IMR-90 (cell line): ENCODE measurements at regions of chr5 and their contacts with region 1.

Region 1: DNA sequence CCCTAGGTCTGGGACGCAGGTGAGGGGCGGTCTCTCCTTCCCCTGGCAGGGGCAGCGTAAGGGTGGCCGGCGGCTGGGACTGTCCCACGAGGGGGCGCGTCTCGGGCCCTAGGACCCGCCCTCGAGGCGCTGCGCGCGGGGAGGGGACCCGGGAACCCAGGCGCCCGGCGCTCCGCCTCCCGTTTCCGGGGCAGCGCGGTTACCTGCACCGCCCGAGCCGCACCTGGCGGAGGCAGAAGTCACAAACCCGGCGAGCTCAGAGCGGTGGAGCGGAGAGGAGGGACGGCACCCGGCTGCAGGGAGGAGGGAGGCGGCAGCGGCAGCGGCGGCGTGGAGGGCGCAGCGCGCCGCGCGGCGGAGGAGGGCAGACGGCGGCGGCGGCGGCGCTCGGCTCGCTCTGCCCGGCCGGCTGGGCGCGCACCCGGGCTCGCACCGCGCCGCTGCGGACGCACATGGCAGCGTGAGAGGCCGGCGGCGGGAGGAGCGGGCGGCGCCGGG is at the start of gene WWC1:
- DNase-seq: peak; percentile 26
- ATAC-seq: peak; percentile 71
- H3K4me3 ChIP-seq: peak within 1 kb of the TSS; percentile 98
- H3K27ac ChIP-seq: peak within 1 kb of the TSS; percentile 47; the same call in 1 of the 2 replicates
- H3K4me1 ChIP-seq: peaks cover 14% of the 10 kb centered on the region
- H3K27me3 ChIP-seq: no peaks in the 10 kb centered on the region
- CTCF ChIP-seq: peak; percentile 28; the same call in 1 of the 2 replicates
- POLR2A ChIP-seq: no peak
- RAD21 ChIP-seq: no peak
- total RNA-seq, gene WWC1: 9.1 and 10.3 TPM in 2 replicates

Region 2: DNA sequence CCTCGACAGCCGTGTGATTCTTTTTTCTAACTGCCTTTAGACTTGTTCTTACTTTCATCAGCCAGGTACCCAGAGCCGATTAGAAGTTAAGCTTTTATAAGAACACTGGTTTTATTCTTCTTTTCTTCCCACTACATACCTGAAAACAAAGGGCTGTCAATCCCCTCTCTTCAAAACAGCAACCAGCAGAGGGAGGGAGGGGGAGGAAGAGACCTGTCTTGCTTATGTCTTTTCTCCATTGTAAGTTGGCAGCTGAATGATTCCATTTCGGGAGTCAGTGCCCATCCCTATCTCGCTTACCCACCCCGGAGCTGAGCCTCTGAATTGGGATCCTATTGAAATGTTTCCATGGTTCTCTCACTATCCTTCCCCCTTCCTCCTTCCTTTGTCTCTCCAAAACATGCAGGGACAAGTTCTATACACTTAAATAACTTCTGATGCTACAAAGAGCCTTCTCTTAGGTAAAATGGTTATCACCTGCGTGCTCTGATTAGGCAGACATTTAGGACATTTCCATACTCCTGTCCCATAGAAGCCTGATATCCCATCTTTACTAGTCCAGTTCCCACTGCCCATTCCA is 84.0 kb before region 1 on chr5:
- CTCF ChIA-PET with region 1: no interaction called
- POLR2A ChIA-PET with region 1: no interaction called
- dilution Hi-C with region 1: no loop called
- in situ Hi-C with region 1: no loop called
- intact Hi-C with region 1: no loop called
- DNase-seq: no peak
- ATAC-seq: no peak
- H3K4me3 ChIP-seq: no peak overlapping the region
- H3K27ac ChIP-seq: no peak overlapping the region
- H3K4me1 ChIP-seq: no peaks in the 10 kb centered on the region
- H3K27me3 ChIP-seq: no peaks in the 10 kb centered on the region
- CTCF ChIP-seq: no peak
- POLR2A ChIP-seq: no peak
- RAD21 ChIP-seq: no peak

Region 3: GRCh38 chr5:168314735-168315418 is 23.4 kb after region 1 on chr5:
- CTCF ChIA-PET with region 1: interaction called, 3 read pairs
- POLR2A ChIA-PET with region 1: interaction called, 7 read pairs
- dilution Hi-C with region 1: no loop called
- in situ Hi-C with region 1: no loop called
- intact Hi-C with region 1: loop called (anchors 2 kb)
- DNase-seq: peak; percentile 99
- ATAC-seq: peak; percentile 71
- H3K4me3 ChIP-seq: no peak overlapping the region
- H3K27ac ChIP-seq: peak overlapping the region; percentile 75
- H3K4me1 ChIP-seq: peaks cover 29% of the 10 kb centered on the region
- H3K27me3 ChIP-seq: no peaks in the 10 kb centered on the region
- CTCF ChIP-seq: peak; percentile 6; the same call in 1 of the 2 replicates
- POLR2A ChIP-seq: no peak
- RAD21 ChIP-seq: peak; percentile 4; the same call in 1 of the 2 replicates

Region 4: GRCh38 chr5:168409580-168410458 is 118.3 kb after region 1 on chr5:
- CTCF ChIA-PET with region 1: no interaction called
- POLR2A ChIA-PET with region 1: interaction called, 4 read pairs
- dilution Hi-C with region 1: no loop called
- in situ Hi-C with region 1: no loop called
- intact Hi-C with region 1: loop called (anchors 5 kb)
- DNase-seq: peak; percentile 91
- ATAC-seq: peak; percentile 76
- H3K4me3 ChIP-seq: no peak overlapping the region
- H3K27ac ChIP-seq: no peak overlapping the region; the same call in 1 of the 2 replicates
- H3K4me1 ChIP-seq: peaks cover 9% of the 10 kb centered on the region
- H3K27me3 ChIP-seq: no peaks in the 10 kb centered on the region
- CTCF ChIP-seq: no peak
- POLR2A ChIP-seq: no peak
- RAD21 ChIP-seq: no peak

Region 5: GRCh38 chr5:168434001-168434400 is 142.5 kb after region 1 on chr5:
- CTCF ChIA-PET with region 1: no interaction called
- POLR2A ChIA-PET with region 1: no interaction called
- dilution Hi-C with region 1: no loop called
- in situ Hi-C with region 1: loop called (anchors 25 kb)
- intact Hi-C with region 1: no loop called
- DNase-seq: no peak
- ATAC-seq: no peak
- H3K4me3 ChIP-seq: no peak overlapping the region
- H3K27ac ChIP-seq: no peak overlapping the region
- H3K4me1 ChIP-seq: 0 out of 2 replicates have a peak, but pooled peaks cover 4% of the 10 kb centered on the region
- H3K27me3 ChIP-seq: no peaks in the 10 kb centered on the region
- CTCF ChIP-seq: no peak
- POLR2A ChIP-seq: no peak
- RAD21 ChIP-seq: no peak

Region 6: GRCh38 chr5:168472329-168472728 is 180.8 kb after region 1 on chr5:
- CTCF ChIA-PET with region 1: interaction called, 4 read pairs
- POLR2A ChIA-PET with region 1: no interaction called
- dilution Hi-C with region 1: no loop called
- in situ Hi-C with region 1: no loop called
- intact Hi-C with region 1: loop called (anchors 5 kb)
- DNase-seq: peak; percentile 96
- ATAC-seq: peak; percentile 98
- H3K4me3 ChIP-seq: no peak overlapping the region
- H3K27ac ChIP-seq: peak overlapping the region; percentile 75; the same call in 1 of the 2 replicates
- H3K4me1 ChIP-seq: peaks cover 19% of the 10 kb centered on the region
- H3K27me3 ChIP-seq: no peaks in the 10 kb centered on the region
- CTCF ChIP-seq: peak; percentile 53
- POLR2A ChIP-seq: 0 out of 2 replicates have a peak, but pooled peaks have one; percentile 41
- RAD21 ChIP-seq: peak; percentile 66